ENCODE measurements at regions of chr9 and their contacts with region 1.

Region 1: GRCh38 chr9:91422758-91423711 is 597 bp downstream of the NFIL3 start:
- DNase-seq: peak; percentile 75
- H3K4me3 ChIP-seq: peak overlapping the region; percentile 60 to 83 (median 69)
- H3K27ac ChIP-seq: peak overlapping the region; percentile 93 to 98 (median 94)
- H3K4me1 ChIP-seq: peaks cover 12 to 53% (median 42%) of the 10 kb centered on the region in 4 donors
- H3K27me3 ChIP-seq: peaks cover 6% of the 10 kb centered on the region
- CTCF ChIP-seq: peak in 2 of 5 experiments; percentile 13 to 31
- EP300 ChIP-seq: peak; percentile 98
- POLR2A ChIP-seq: peak; percentile 65

Region 2: DNA sequence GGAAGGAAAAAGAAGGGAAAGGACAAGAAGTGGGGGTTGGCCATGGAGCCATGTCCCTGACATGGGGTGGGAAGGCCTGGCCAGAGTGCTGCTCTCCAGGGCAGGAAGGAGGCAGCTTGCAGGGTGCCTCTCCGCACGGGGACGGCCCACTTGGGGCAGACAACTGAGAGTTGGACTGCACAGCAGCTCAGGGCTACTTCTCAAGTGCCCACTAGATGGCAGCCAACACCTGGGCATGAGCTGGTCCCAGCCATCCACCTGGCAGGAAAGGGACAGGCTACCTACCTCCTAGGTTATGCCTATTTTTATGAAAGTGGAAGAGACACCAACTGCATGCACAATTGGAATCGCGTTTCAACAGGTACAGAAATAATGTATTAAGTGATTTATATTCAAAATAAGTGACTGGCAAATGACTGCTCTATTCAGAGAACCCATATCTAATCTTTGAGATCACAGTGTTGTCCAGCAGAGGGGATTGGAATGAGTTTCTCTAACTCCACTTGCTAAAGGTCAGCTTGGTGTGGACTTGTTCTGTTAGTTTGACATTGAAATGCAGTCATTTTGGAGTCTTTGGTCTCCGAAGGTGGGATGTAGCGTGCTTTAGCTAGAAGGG is 508.1 kb before region 1 on chr9:
- in situ Hi-C with region 1: loop called in 2 of 4 experiments (anchors 5 to 25 kb)
- intact Hi-C with region 1: no loop called
- DNase-seq: peak; percentile 83
- H3K4me3 ChIP-seq: no peak overlapping the region
- H3K27ac ChIP-seq: peak overlapping the region in 1 of 4 donors; percentile 18
- H3K4me1 ChIP-seq: no peaks in the 10 kb centered on the region
- H3K27me3 ChIP-seq: no peaks in the 10 kb centered on the region
- CTCF ChIP-seq: peak; percentile 87 to 97 (median 89)
- EP300 ChIP-seq: no peak
- POLR2A ChIP-seq: no peak

Region 3: DNA sequence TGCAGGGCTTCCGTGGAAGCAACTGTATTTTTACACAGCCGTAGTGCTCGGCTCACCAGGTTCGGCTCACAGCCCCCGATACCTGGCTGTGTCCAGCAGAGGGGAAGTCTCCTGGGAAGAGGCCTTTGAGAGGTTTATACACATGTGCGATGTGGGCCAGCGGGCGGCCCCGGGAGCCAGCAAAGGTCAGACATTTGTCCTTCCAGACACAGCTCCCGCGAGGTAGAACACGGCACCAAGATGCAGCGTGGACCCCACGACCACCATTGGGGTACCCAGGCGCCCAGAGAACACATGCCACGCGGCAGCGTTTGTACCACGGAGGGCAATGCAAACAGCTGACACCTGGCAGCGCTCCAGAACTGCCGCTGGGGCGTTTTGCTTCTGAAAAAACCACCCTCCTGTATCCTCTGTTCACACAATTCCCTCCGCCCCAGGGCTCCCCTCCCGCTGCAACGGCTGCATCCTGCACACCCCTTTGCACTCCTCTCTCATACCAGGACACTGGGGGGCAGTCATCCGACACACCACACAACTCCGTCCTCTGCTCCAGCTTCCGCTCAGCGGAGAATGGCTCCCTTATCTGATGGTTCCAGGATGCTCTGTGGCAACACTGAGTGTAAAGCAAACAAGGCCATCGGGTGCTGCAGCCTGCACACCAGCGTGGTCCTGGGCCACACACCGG is 386.1 kb before region 1 on chr9:
- in situ Hi-C with region 1: loop called in 2 of 4 experiments (anchors 25 kb)
- intact Hi-C with region 1: loop called (anchors 5 kb)
- DNase-seq: peak; percentile 79
- H3K4me3 ChIP-seq: no peak overlapping the region
- H3K27ac ChIP-seq: peak overlapping the region; percentile 57 to 73 (median 65)
- H3K4me1 ChIP-seq: peaks cover 15 to 21% (median 20%) of the 10 kb centered on the region in 4 donors
- H3K27me3 ChIP-seq: no peaks in the 10 kb centered on the region
- CTCF ChIP-seq: peak; percentile 44 to 78 (median 46)
- EP300 ChIP-seq: no peak
- POLR2A ChIP-seq: no peak

Region 4: GRCh38 chr9:91193658-91194391 is 229.2 kb before region 1 on chr9:
- in situ Hi-C with region 1: loop called in 2 of 4 experiments (anchors 5 to 10 kb)
- intact Hi-C with region 1: loop called (anchors 2 kb)
- DNase-seq: peak; percentile 91
- H3K4me3 ChIP-seq: peak overlapping the region in 3 of 4 donors; percentile 35 to 56 (median 39)
- H3K27ac ChIP-seq: peak overlapping the region; percentile 95 to 99 (median 98)
- H3K4me1 ChIP-seq: peaks cover 44 to 73% (median 60%) of the 10 kb centered on the region in 4 donors
- H3K27me3 ChIP-seq: no peaks in the 10 kb centered on the region
- CTCF ChIP-seq: no peak
- EP300 ChIP-seq: peak; percentile 79
- POLR2A ChIP-seq: peak; percentile 91

Region 5: GRCh38 chr9:91361291-91362050 is 61.6 kb before region 1 on chr9 and contains the start of gene AUH:
- in situ Hi-C with region 1: loop called in 1 of 4 experiments (anchors 10 kb)
- intact Hi-C with region 1: no loop called
- DNase-seq: peak; percentile 91
- H3K4me3 ChIP-seq: peak within 1 kb of the TSS; percentile 82 to 97 (median 88)
- H3K27ac ChIP-seq: peak within 1 kb of the TSS; percentile 91 to 94 (median 92)
- H3K4me1 ChIP-seq: peaks cover 0 to 22% (median 19%) of the 10 kb centered on the region in 4 donors
- H3K27me3 ChIP-seq: no peaks in the 10 kb centered on the region
- CTCF ChIP-seq: no peak
- EP300 ChIP-seq: no peak
- POLR2A ChIP-seq: peak; percentile 52
- total RNA-seq, gene AUH: 55.0 to 136 (median 83.8) TPM

Region 6: DNA sequence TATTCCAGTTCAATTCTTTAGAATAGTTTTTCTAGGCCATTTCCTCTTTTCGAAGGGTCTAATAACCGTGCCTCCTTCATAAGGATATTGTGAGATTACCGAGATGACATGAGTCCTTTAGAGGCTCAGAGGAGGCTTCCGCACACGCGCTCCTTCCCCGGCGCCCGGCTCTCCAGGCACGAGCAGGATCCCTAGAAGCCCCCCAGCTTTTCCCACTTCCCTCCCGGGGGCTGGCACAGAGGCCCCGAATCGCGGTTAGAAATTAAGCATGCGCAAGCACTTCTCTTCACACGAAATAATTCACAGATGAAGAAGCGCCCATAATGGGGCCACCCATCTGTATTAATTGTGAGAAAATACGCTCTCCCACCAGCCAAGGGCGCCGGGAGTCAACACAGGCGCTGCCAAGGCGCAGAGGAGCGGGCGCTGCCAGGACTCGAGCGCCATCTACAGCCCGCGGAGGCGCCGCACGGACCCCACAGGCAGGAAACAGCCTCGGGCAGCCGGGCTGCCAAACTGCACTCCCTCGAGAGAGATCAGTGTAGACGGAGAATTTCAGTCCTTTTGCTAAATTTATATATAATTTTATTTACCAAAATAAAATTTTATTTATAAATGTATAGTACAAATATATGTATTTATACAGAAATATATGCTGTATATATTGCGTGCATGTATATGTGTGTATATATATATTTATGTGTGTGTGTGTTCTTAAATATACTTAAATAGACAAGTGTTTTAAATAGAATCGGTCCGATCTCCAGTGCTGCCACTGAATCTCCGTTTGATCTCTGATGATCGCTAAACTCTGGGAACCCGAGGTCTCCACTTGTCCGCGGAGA is 258.6 kb after region 1 on chr9:
- in situ Hi-C with region 1: loop called in 2 of 4 experiments (anchors 25 kb)
- intact Hi-C with region 1: no loop called
- DNase-seq: peak; percentile 78
- H3K4me3 ChIP-seq: no peak overlapping the region
- H3K27ac ChIP-seq: no peak overlapping the region
- H3K4me1 ChIP-seq: peaks cover 0 to 12% (median 0%) of the 10 kb centered on the region in 4 donors
- H3K27me3 ChIP-seq: peaks cover 4% of the 10 kb centered on the region
- CTCF ChIP-seq: peak; percentile 70 to 94 (median 90)
- EP300 ChIP-seq: no peak
- POLR2A ChIP-seq: no peak

Region 7: DNA sequence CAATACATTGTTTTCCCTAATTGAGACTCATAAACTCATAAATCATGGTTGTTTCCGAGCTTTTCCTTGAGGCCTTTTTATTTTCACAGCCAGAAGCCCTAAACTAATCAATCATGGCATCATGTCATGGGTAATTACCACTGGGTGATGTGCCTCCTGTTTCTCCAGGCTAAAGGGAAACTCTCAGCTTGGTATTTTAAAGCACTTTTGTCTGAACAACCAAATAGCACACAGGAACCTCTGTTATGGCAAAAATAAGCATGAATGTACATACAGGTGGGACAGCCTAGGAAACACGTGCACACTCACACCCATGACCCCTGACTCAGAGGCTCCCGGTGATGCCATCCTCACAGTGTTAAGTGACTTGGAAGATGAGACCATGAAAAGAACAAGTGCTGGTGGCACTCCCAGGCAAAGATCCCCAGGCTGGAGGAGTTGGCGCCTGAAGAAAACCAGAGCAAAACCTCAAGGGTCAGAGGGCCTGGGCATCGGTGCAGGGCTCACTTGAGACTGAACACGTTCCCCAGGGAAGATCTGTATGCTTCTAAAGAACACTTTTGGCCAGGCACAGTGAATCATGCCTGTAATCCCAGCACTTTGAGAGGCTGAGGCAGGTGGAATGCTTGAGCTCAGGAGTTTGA is 372.7 kb after region 1 on chr9:
- in situ Hi-C with region 1: no loop called
- intact Hi-C with region 1: no loop called
- DNase-seq: no peak
- H3K4me3 ChIP-seq: no peak overlapping the region
- H3K27ac ChIP-seq: peak overlapping the region; percentile 71 to 84 (median 80)
- H3K4me1 ChIP-seq: peaks cover 17 to 50% (median 31%) of the 10 kb centered on the region in 4 donors
- H3K27me3 ChIP-seq: no peaks in the 10 kb centered on the region
- CTCF ChIP-seq: no peak
- EP300 ChIP-seq: no peak
- POLR2A ChIP-seq: no peak

Measured in transverse colon (tissue), 4 donors.